CD4-positive, alpha-beta memory T cell (primary cell): ENCODE measurements at regions of chr17 and their contacts with region 1.

Region 1: DNA sequence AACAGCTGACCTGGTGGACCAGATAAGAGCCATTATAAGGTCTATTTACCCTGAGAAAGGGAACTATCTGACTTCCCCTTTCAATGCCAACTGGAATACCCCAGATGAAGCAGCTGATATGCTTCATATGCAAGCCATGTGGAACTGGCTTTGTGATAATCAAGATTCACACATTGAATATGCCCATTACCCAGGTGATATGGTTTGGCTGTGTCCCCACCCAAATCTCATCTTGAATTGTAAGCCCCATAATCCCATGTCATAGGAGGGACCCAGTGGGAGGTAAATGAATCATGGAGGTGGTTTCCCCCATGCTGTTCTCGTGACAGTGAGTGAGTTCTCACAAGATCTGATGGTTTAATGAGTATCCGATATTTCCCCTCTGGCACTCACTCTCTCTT is 42.1 kb downstream of the IKZF3 start:
- DNase-seq: peak in 1 of 5 donors; percentile 44
- H3K4me3 ChIP-seq: no peak overlapping the region
- H3K4me3 Mint-ChIP-seq: no peak overlapping the region
- H3K27ac ChIP-seq: peak overlapping the region; percentile 66
- H3K27ac Mint-ChIP-seq: peak overlapping the region; percentile 81 to 98 (median 94)
- H3K4me1 ChIP-seq: peaks cover 51% of the 10 kb centered on the region
- H3K4me1 Mint-ChIP-seq: peaks cover 36 to 61% (median 45%) of the 10 kb centered on the region in 4 donors
- H3K27me3 ChIP-seq: no peaks in the 10 kb centered on the region
- H3K27me3 Mint-ChIP-seq: no peaks in the 10 kb centered on the region

Region 2: GRCh38 chr17:39769974-39770587 is 52.0 kb before region 1 on chr17:
- CTCF ChIA-PET with region 1: interaction called, 4 read pairs
- POLR2A ChIA-PET with region 1: interaction called, 50 read pairs
- intact Hi-C with region 1: no loop called
- DNase-seq: peak; percentile 67 to 92 (median 72)
- H3K4me3 ChIP-seq: peak overlapping the region in 1 of 2 donors; percentile 6
- H3K4me3 Mint-ChIP-seq: peak overlapping the region; percentile 33 to 96 (median 66)
- H3K27ac ChIP-seq: peak overlapping the region; percentile 77
- H3K27ac Mint-ChIP-seq: peak overlapping the region; percentile 88 to 98 (median 95)
- H3K4me1 ChIP-seq: peaks cover 100% of the 10 kb centered on the region
- H3K4me1 Mint-ChIP-seq: peaks cover 81 to 100% (median 89%) of the 10 kb centered on the region in 4 donors
- H3K27me3 ChIP-seq: no peaks in the 10 kb centered on the region
- H3K27me3 Mint-ChIP-seq: no peaks in the 10 kb centered on the region

Region 3: GRCh38 chr17:39794249-39794970 is 27.6 kb before region 1 on chr17:
- CTCF ChIA-PET with region 1: interaction called, 7 read pairs
- POLR2A ChIA-PET with region 1: interaction called, 64 read pairs
- intact Hi-C with region 1: no loop called
- DNase-seq: peak; percentile 50 to 67 (median 58)
- H3K4me3 ChIP-seq: no peak overlapping the region
- H3K4me3 Mint-ChIP-seq: peak overlapping the region in 7 of 8 donors; percentile 40 to 82 (median 73)
- H3K27ac ChIP-seq: peak overlapping the region; percentile 54
- H3K27ac Mint-ChIP-seq: peak overlapping the region; percentile 83 to 97 (median 91)
- H3K4me1 ChIP-seq: peaks cover 75% of the 10 kb centered on the region
- H3K4me1 Mint-ChIP-seq: peaks cover 56 to 85% (median 70%) of the 10 kb centered on the region in 4 donors
- H3K27me3 ChIP-seq: no peaks in the 10 kb centered on the region
- H3K27me3 Mint-ChIP-seq: no peaks in the 10 kb centered on the region

Region 4: DNA sequence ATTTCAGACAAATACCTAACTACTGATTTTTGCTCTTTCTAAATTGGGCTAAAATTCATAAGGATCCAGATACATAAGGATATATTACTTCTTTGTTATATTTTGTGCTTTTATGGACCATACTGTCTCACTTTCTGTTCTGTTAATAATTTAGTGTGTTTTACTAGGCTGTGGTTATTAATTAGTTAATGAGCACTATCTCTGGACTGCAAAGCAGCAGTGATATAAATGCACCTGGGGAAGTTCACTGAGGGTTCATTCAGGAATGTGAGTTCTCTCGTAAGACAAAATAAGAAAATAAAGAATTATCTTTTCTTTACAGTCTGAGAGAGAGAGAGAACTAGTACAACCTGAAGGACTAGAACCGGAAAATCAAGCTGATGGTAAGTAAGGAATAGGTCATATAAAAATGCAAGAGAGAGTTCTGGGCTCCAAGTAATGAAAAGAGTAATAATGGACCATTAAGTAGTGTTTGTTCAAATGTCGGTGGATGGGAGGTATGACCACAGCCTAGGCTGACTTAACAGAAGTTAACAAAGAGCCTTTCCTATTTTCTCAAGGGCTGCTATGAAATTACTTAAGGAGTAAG is 13.5 kb before region 1 on chr17:
- CTCF ChIA-PET with region 1: interaction called, 8 read pairs
- POLR2A ChIA-PET with region 1: interaction called, 12 read pairs
- intact Hi-C with region 1: no loop called
- DNase-seq: no peak
- H3K4me3 ChIP-seq: no peak overlapping the region
- H3K4me3 Mint-ChIP-seq: no peak overlapping the region
- H3K27ac ChIP-seq: no peak overlapping the region
- H3K27ac Mint-ChIP-seq: peak overlapping the region in 2 of 7 donors; percentile 20 to 31
- H3K4me1 ChIP-seq: peaks cover 53% of the 10 kb centered on the region
- H3K4me1 Mint-ChIP-seq: peaks cover 48 to 64% (median 53%) of the 10 kb centered on the region in 4 donors
- H3K27me3 ChIP-seq: no peaks in the 10 kb centered on the region
- H3K27me3 Mint-ChIP-seq: no peaks in the 10 kb centered on the region

Region 5: DNA sequence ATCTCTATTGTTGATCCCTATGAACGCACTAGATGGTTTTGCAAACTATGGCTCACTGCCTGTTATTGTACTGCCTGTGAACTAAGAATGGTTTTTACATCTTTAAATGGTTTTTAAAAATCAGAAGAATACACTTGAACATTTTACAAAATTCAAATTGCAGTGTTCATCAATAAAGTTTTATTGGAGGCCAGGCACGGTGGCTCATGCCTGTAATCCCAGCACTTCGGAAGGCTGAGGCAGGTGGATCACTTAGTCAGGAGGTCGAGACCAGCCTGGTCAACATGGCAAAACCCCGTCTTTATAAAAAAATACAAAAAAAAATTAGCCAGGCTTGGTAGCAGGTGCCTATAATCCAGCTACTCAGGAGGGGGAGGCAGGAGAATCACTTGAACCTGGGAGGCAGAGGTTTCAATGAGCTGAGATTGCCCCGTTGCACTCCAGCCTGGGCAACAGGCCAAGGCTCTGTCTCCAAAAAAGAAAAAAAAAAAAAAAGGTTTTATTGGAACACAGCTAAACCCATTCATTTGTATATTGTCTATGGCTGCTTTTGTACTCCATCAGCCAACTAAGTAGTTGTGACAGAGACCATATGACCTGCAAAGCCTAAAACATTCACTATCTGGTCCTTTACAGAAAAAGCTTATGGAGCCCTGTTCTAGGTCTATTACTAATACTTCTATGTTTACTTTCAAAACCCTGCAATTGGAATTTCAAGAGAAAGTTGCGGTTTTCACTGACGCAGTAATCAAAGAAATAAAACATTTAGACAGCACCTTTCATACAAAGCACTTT is 23.2 kb after region 1 on chr17:
- CTCF ChIA-PET with region 1: interaction called, 3 read pairs
- POLR2A ChIA-PET with region 1: interaction called, 20 read pairs
- intact Hi-C with region 1: no loop called
- DNase-seq: no peak
- H3K4me3 ChIP-seq: no peak overlapping the region
- H3K4me3 Mint-ChIP-seq: peak overlapping the region in 3 of 8 donors; percentile 8 to 54 (median 20)
- H3K27ac ChIP-seq: no peak overlapping the region
- H3K27ac Mint-ChIP-seq: peak overlapping the region in 5 of 7 donors; percentile 7 to 70 (median 32)
- H3K4me1 ChIP-seq: peaks cover 71% of the 10 kb centered on the region
- H3K4me1 Mint-ChIP-seq: peaks cover 47 to 78% (median 60%) of the 10 kb centered on the region in 4 donors
- H3K27me3 ChIP-seq: no peaks in the 10 kb centered on the region
- H3K27me3 Mint-ChIP-seq: no peaks in the 10 kb centered on the region